Naive thymus-derived CD4-positive, alpha-beta T cell (primary cell): ENCODE measurements at regions of chr17 and their contacts with region 1.

Region 1: DNA sequence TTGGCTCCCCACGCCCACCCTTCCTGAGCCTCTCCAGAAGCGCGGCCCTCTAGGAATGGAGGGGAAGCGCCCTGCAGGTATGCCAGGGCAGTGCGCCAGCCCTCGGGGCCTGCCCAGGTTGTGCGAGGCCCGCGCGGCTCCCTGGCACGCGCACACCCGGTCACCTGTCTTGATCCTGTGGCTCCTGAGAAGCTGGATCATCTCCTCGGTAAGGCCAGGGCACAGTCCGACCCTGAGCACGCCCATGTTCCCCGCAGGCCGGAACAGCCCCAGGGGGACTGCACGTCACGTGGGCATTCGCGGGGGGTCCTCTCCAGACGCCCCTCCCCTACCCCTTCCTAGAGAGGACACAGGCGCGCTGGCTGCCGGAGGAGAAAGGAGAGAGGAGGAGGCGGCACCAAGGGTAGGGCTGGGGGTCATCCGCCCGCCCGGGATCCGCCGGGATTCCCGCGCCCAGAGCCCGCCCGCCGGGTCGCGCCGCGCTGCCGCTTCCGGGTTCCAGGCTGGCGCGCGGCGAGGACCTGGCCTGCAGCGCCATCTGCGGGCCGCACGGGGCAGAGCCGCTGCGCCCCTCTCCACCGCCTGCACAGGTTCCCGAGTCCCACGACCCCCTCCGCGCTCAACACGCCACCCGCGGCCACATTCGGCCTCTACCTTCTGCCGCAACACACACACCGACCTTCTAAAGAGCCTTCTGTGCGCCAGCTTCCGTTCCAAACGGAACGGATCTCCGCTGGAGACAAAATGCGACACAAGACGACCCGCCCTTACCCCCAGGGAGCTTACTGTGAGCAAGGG is at the start of gene RAD51D:
- DNase-seq: peak; percentile 71 to 90 (median 83)
- ATAC-seq: peak; percentile 96
- H3K4me3 ChIP-seq: peak within 1 kb of the TSS; percentile 82
- H3K4me3 Mint-ChIP-seq: peak within 1 kb of the TSS; percentile 87 to 97 (median 94)
- H3K27ac ChIP-seq: peak within 1 kb of the TSS; percentile 81
- H3K27ac Mint-ChIP-seq: peak within 1 kb of the TSS; percentile 88 to 96 (median 93)
- H3K4me1 ChIP-seq: peaks cover 14 to 15% of the 10 kb centered on the region in 2 donors
- H3K4me1 Mint-ChIP-seq: peaks cover 23 to 45% (median 33%) of the 10 kb centered on the region in 7 donors
- H3K27me3 ChIP-seq: no peaks in the 10 kb centered on the region
- H3K27me3 Mint-ChIP-seq: no peaks in the 10 kb centered on the region
- total RNA-seq, gene RAD51D: 15.0 to 34.2 (median 25.4) TPM

Region 2: GRCh38 chr17:34542700-34543336 is 576.7 kb before region 1 on chr17:
- CTCF ChIA-PET with region 1: interaction called, 11 read pairs
- POLR2A ChIA-PET with region 1: no interaction called
- intact Hi-C with region 1: loop called (anchors 1 kb)
- DNase-seq: peak; percentile 18 to 58 (median 35)
- ATAC-seq: peak; percentile 62
- H3K4me3 ChIP-seq: no peak overlapping the region
- H3K4me3 Mint-ChIP-seq: no peak overlapping the region
- H3K27ac ChIP-seq: no peak overlapping the region
- H3K27ac Mint-ChIP-seq: no peak overlapping the region
- H3K4me1 ChIP-seq: no peaks in the 10 kb centered on the region
- H3K4me1 Mint-ChIP-seq: no peaks in the 10 kb centered on the region
- H3K27me3 ChIP-seq: no peaks in the 10 kb centered on the region
- H3K27me3 Mint-ChIP-seq: peaks cover 21 to 34% (median 30%) of the 10 kb centered on the region in 5 donors

Region 3: GRCh38 chr17:34637548-34638525 is 481.7 kb before region 1 on chr17:
- CTCF ChIA-PET with region 1: no interaction called
- POLR2A ChIA-PET with region 1: no interaction called
- intact Hi-C with region 1: loop called in 1 of 2 experiments (anchors 2 kb)
- DNase-seq: peak; percentile 63 to 86 (median 80)
- ATAC-seq: peak; percentile 96
- H3K4me3 ChIP-seq: peak overlapping the region; percentile 68
- H3K4me3 Mint-ChIP-seq: peak overlapping the region; percentile 30 to 93 (median 89)
- H3K27ac ChIP-seq: peak overlapping the region; percentile 17
- H3K27ac Mint-ChIP-seq: peak overlapping the region in 6 of 9 donors; percentile 25 to 76 (median 56)
- H3K4me1 ChIP-seq: peaks cover 4 to 12% of the 10 kb centered on the region in 2 donors
- H3K4me1 Mint-ChIP-seq: peaks cover 0 to 19% (median 6%) of the 10 kb centered on the region in 7 donors
- H3K27me3 ChIP-seq: no peaks in the 10 kb centered on the region
- H3K27me3 Mint-ChIP-seq: peaks cover 0 to 35% (median 3%) of the 10 kb centered on the region in 5 donors

Region 4: GRCh38 chr17:34998205-34998604 is 121.4 kb before region 1 on chr17:
- CTCF ChIA-PET with region 1: interaction called, 55 read pairs
- POLR2A ChIA-PET with region 1: interaction called, 21 read pairs
- intact Hi-C with region 1: loop called (anchors 1 kb)
- DNase-seq: peak; percentile 62 to 82 (median 76)
- ATAC-seq: peak; percentile 96
- H3K4me3 ChIP-seq: no peak overlapping the region
- H3K4me3 Mint-ChIP-seq: no peak overlapping the region
- H3K27ac ChIP-seq: no peak overlapping the region
- H3K27ac Mint-ChIP-seq: peak overlapping the region; percentile 60 to 89 (median 82)
- H3K4me1 ChIP-seq: no peaks in the 10 kb centered on the region
- H3K4me1 Mint-ChIP-seq: peaks cover 5 to 10% (median 6%) of the 10 kb centered on the region in 7 donors
- H3K27me3 ChIP-seq: no peaks in the 10 kb centered on the region
- H3K27me3 Mint-ChIP-seq: no peaks in the 10 kb centered on the region

Region 5: DNA sequence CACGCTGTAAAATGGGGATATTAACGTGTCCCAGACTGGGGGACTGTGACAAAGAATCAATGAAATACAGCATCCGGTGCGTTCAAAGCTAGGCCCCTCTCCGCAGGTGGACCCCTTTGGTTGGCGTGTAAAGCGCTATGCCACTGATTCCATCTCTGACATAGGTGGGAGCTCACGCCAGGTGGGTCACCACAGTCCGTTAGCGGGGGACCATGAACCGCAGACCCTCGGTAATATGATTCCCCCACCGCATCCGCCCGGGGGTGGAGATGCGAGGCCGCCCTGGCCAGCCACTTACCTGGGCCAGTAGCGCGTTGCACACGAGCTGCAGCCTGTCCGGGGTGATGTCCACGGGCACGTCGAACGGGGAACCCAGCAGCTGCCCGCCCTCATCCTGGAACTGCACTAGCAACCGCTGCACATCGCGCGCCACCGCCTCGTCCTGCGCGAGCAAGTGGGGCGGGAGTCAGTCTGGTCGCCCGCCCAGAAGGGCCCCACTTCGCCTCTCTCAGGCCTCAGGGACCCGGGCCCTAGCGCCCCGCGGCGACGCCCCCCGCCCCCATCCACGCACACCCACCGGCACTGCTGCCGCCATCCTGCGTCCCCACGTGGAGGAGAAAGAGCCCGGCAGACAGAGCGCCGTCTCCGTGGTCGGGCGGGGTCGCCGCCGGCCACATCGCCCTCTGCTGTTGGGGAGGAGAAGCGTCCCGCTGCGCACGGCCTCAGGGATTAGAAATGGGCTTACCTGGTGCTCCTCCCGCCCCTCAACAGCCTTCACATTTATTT is 22.3 kb after region 1 on chr17 and contains the start of gene NLE1:
- CTCF ChIA-PET with region 1: no interaction called
- POLR2A ChIA-PET with region 1: interaction called, 4 read pairs
- intact Hi-C with region 1: loop called in 1 of 2 experiments (anchors 1 kb)
- DNase-seq: peak; percentile 79 to 94 (median 89)
- ATAC-seq: peak; percentile 100
- H3K4me3 ChIP-seq: peak within 1 kb of the TSS; percentile 79
- H3K4me3 Mint-ChIP-seq: peak within 1 kb of the TSS; percentile 77 to 88 (median 86)
- H3K27ac ChIP-seq: peak within 1 kb of the TSS; percentile 81
- H3K27ac Mint-ChIP-seq: peak within 1 kb of the TSS; percentile 66 to 90 (median 87)
- H3K4me1 ChIP-seq: peaks cover 6 to 13% of the 10 kb centered on the region in 2 donors
- H3K4me1 Mint-ChIP-seq: peaks cover 7 to 30% (median 21%) of the 10 kb centered on the region in 7 donors
- H3K27me3 ChIP-seq: no peaks in the 10 kb centered on the region
- H3K27me3 Mint-ChIP-seq: no peaks in the 10 kb centered on the region
- total RNA-seq, gene NLE1: 10.0 to 29.4 (median 21.8) TPM